ENCODE measurements at regions of chr7 and their contacts with region 1.

Region 1: GRCh38 chr7:75994388-75995051 is at the start of gene TMEM120A:
- DNase-seq: peak; percentile 98 to 99
- ATAC-seq: peak; percentile 96
- H3K4me3 ChIP-seq: peak within 1 kb of the TSS; percentile 46 to 81
- H3K27ac ChIP-seq: peak within 1 kb of the TSS; percentile 95 to 99
- H3K4me1 ChIP-seq: no peaks in the 10 kb centered on the region
- H3K27me3 ChIP-seq: no peaks in the 10 kb centered on the region
- total RNA-seq, gene TMEM120A: 53.8 to 75.1 TPM

Region 2: DNA sequence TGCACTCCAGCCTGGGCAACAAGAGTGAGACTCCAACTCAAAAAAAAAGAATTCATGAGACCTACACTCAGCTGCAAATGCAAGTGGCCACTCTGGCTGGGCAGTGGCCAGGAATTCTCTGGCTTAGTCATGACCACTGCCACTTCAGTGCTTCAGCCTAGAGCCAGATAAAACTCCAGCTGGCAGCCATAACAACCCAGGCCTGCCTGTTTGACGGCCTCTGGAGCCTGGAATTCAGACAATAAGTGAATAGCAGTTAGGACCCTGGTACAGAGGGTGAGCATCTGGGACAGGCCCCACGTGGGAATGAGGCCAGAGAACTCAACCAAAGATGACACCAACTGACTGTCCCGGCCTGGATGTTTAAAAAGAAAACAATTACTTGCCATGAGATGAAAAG is 939.8 kb before region 1 on chr7:
- intact Hi-C with region 1: no loop called
- DNase-seq: peak; percentile 91 to 94
- ATAC-seq: peak; percentile 64
- H3K4me3 ChIP-seq: no peak overlapping the region
- H3K27ac ChIP-seq: peak overlapping the region; percentile 94 to 96
- H3K4me1 ChIP-seq: peaks cover 0 to 2% of the 10 kb centered on the region in 2 donors
- H3K27me3 ChIP-seq: no peaks in the 10 kb centered on the region

Region 3: GRCh38 chr7:75878769-75879611 is 115.5 kb before region 1 on chr7 and contains the start of gene RHBDD2:
- intact Hi-C with region 1: loop called in 1 of 2 experiments (anchors 5 kb)
- DNase-seq: peak; percentile 98
- ATAC-seq: peak; percentile 99
- H3K4me3 ChIP-seq: peak within 1 kb of the TSS; percentile 70 to 77
- H3K27ac ChIP-seq: peak within 1 kb of the TSS in 1 of 2 donors; percentile 67
- H3K4me1 ChIP-seq: no peaks in the 10 kb centered on the region
- H3K27me3 ChIP-seq: no peaks in the 10 kb centered on the region
- total RNA-seq, gene RHBDD2: 31.1 to 40.1 TPM

Region 4: DNA sequence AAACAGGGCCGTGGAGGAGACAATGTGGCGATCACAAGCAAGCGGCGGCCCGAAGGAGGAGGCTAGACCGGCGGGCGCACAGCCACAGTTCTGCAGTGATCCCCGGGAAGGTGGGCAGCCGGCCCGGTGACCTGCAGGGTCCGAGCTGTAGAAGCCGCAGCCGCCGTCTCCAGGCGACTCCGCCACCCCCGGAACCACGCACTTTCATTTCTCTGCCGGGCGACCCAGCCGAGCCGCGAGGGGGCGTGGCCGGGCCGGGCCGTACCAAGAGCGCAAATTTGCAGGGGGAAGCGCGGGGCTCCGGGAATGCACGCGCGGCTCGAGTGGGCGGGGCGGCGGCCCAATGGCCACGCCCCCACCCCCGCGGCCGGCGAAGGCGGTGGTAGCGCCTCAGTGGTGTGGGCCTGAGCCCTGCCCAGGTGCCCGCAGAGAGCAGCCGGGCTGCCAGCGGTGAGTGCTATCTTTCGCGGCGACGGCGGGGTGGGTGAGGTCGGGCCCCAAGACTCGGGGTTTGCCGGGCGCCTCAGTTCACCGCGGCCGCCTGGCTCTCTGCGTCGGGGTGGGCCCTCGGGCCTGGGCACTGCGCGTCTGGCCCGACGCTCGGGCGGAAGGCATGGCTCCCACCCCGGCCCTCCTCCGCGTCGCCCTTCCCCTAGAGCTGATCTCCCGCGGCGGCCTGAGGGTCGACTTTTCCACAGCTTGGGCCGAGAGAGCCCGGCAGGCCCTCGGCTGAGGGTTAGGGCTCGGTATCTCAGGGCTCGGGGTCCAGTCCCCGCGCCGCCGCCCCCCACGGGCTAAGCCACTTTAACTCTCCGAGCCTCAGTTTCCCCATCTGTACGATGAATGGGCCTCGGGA is 79.6 kb before region 1 on chr7 and contains the start of gene POR:
- intact Hi-C with region 1: loop called (anchors 1 to 5 kb)
- DNase-seq: peak; percentile 96 to 99
- ATAC-seq: peak; percentile 99
- H3K4me3 ChIP-seq: peak within 1 kb of the TSS; percentile 56 to 91
- H3K27ac ChIP-seq: peak within 1 kb of the TSS in 1 of 2 donors; percentile 67
- H3K4me1 ChIP-seq: no peaks in the 10 kb centered on the region
- H3K27me3 ChIP-seq: no peaks in the 10 kb centered on the region
- total RNA-seq, gene POR: 87.4 to 121 TPM

Region 5: GRCh38 chr7:76047811-76048667 is 53.5 kb after region 1 on chr7 and contains the starts of genes MDH2 and STYXL1:
- intact Hi-C with region 1: loop called in 1 of 2 experiments (anchors 5 kb)
- DNase-seq: peak; percentile 97 to 98
- ATAC-seq: peak; percentile 99
- H3K4me3 ChIP-seq: peak within 1 kb of the TSS; percentile 76 to 84
- H3K27ac ChIP-seq: peak within 1 kb of the TSS; percentile 57 to 82
- H3K4me1 ChIP-seq: peaks cover 0 to 6% of the 10 kb centered on the region in 2 donors
- H3K27me3 ChIP-seq: no peaks in the 10 kb centered on the region
- total RNA-seq, gene MDH2: 68.4 to 87.9 TPM
- total RNA-seq, gene STYXL1: 6.1 to 16.8 TPM

Measured in aorta (tissue), 5 donors.